ENCODE measurements at regions of chr18 and their contacts with region 1.

Region 1: DNA sequence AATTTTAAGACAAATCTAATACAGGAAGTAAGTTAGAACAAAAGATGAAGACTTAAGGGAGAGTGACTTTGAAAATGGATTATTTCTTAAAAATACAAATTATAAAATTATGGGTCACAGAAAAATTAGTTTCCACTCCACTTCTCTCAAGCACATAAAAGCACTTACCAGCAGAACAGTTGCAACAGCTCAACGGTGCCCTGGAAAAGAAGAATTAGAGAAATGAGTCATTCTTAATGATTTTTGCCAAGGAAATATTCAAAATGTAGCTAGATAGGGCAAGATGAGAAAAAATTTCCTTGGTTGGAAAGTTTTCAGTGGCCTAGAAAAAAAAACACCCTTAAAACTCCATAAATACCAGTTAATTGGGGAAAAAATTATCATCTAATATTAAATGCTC is 2185.6 kb upstream of the CELF4 start:
- DNase-seq: no peak
- ATAC-seq: no peak
- H3K4me3 Mint-ChIP-seq: no peak overlapping the region
- H3K27ac Mint-ChIP-seq: no peak overlapping the region
- H3K4me1 Mint-ChIP-seq: no peaks in the 10 kb centered on the region
- H3K27me3 Mint-ChIP-seq: no peaks in the 10 kb centered on the region

Region 2: DNA sequence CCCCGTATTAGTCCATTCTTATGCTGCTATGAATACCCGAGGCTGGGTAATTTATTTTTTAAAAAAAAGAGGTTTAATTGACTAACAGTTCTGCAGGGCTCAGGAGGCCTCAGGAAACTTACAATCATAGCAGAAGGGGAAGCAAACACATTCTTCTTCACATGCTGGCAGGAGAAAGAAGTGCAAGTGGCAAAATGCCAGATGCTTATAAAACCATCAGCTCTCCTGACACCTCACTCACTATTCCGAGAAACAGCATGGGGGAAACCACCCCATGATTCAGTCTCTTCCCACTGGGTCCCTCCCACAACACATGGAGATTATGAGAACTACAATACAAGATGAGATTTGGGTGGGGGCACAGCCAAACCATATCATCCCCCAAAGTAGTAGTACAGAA is 55.4 kb after region 1 on chr18:
- CTCF ChIA-PET with region 1: no interaction called
- POLR2A ChIA-PET with region 1: no interaction called
- intact Hi-C with region 1: loop called in 1 of 2 experiments (anchors 10 kb)
- DNase-seq: no peak
- ATAC-seq: no peak
- H3K4me3 Mint-ChIP-seq: no peak overlapping the region
- H3K27ac Mint-ChIP-seq: no peak overlapping the region
- H3K4me1 Mint-ChIP-seq: no peaks in the 10 kb centered on the region
- H3K27me3 Mint-ChIP-seq: no peaks in the 10 kb centered on the region